Activated T-helper 2 cell treated with anti-CD3 and anti-CD28 coated beads, Interferon-gamma antibody, Interleukin-2, Interleukin-4, amounts not matched to agents 10 μg/mL and 5 μg/mL and 100 μg/mL, durations not matched to agents 14 hours and 24 hours and 36 hours (primary cell): ENCODE measurements at regions of chr18 and their contacts with region 1.

Region 1: DNA sequence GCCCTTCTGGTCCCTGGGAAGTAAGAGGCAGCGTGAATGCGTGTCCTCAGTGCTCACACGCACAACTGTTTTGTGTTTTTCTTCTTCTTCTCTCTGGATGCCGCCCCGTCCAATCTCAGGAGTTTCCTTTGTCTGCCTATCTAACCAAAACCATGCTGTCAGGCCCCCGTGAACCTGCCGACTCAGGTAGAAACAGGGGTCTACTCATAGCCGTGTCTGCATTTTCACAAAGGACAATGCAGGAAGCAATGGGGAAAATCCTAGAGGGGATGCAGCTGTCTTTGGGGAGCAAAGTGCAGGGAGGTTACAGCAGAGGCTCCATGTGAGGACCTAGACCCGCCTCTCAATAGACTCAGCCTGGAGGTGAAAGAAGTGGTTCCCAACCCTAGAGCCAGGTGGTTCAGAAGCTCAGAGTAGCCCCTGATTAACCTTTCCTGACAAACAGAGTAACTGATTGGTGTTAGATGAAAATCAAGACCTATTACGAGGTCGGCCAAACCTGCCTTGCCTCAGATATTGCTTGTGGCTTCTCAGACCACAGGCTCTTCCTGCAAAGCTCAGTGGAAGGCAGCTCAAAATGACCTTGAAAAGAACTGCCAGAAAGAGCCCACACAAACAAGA is 49.3 kb downstream of the CD226 start:
- DNase-seq: peak; percentile 20
- H3K4me3 Mint-ChIP-seq: peak overlapping the region; percentile 84
- H3K27ac Mint-ChIP-seq: peak overlapping the region; percentile 94
- H3K4me1 Mint-ChIP-seq: peaks cover 65% of the 10 kb centered on the region
- H3K27me3 Mint-ChIP-seq: no peaks in the 10 kb centered on the region

Region 2: GRCh38 chr18:69885841-69886531 is 12.4 kb before region 1 on chr18:
- intact Hi-C with region 1: loop called (anchors 1 kb)
- DNase-seq: peak; percentile 36
- H3K4me3 Mint-ChIP-seq: peak overlapping the region; percentile 76
- H3K27ac Mint-ChIP-seq: peak overlapping the region; percentile 100
- H3K4me1 Mint-ChIP-seq: peaks cover 75% of the 10 kb centered on the region
- H3K27me3 Mint-ChIP-seq: no peaks in the 10 kb centered on the region

Region 3: DNA sequence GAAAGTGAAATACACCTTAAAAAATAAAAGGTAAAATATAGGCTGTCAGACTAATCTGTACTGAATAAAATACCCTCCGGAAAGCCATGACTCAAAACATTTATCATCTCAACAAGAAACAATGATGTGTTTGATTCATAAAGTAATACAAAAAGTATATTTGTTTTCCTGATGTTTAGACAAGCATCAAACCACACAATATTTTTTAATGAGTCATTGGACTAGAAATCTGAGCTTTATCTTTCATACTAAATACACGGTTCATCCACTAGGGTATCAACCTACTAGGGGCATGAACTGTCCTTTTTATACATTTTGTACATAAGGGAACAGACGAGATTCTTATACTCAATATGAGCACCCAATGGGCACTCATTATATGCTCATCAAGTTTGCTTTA is 18.1 kb after region 1 on chr18:
- intact Hi-C with region 1: loop called (anchors 2 kb)
- DNase-seq: no peak
- H3K4me3 Mint-ChIP-seq: no peak overlapping the region
- H3K27ac Mint-ChIP-seq: no peak overlapping the region
- H3K4me1 Mint-ChIP-seq: peaks cover 42% of the 10 kb centered on the region
- H3K27me3 Mint-ChIP-seq: no peaks in the 10 kb centered on the region

Region 4: GRCh38 chr18:69948919-69949537 is 50.7 kb after region 1 on chr18:
- intact Hi-C with region 1: loop called (anchors 1 kb)
- DNase-seq: no peak
- H3K4me3 Mint-ChIP-seq: no peak overlapping the region
- H3K27ac Mint-ChIP-seq: no peak overlapping the region
- H3K4me1 Mint-ChIP-seq: peaks cover 54% of the 10 kb centered on the region
- H3K27me3 Mint-ChIP-seq: no peaks in the 10 kb centered on the region

Region 5: DNA sequence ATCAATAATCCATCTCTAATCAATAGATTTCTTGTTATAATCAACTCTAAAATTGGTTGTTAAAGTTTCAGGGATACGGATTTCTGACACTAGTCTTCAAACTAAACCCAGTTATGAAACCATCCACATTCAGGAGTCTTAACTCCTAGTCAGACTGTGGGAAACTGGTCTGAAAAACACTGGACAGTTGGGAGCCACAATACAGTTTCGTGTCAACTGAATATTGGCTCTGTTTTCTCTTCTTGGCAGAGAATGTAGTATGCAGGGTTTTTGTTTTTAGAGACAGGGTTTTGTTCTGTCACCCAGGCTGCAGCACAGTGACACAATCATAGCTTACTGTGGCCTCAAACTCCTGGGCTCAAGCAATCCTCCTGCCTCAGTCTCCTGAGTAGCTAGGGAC is 184.1 kb after region 1 on chr18:
- intact Hi-C with region 1: loop called (anchors 5 kb)
- DNase-seq: no peak
- H3K4me3 Mint-ChIP-seq: no peak overlapping the region
- H3K27ac Mint-ChIP-seq: no peak overlapping the region
- H3K4me1 Mint-ChIP-seq: peaks cover 8% of the 10 kb centered on the region
- H3K27me3 Mint-ChIP-seq: no peaks in the 10 kb centered on the region